Right cardiac atrium (tissue), 5 donors: ENCODE measurements at regions of chr3 and their contacts with region 1.

Region 1: DNA sequence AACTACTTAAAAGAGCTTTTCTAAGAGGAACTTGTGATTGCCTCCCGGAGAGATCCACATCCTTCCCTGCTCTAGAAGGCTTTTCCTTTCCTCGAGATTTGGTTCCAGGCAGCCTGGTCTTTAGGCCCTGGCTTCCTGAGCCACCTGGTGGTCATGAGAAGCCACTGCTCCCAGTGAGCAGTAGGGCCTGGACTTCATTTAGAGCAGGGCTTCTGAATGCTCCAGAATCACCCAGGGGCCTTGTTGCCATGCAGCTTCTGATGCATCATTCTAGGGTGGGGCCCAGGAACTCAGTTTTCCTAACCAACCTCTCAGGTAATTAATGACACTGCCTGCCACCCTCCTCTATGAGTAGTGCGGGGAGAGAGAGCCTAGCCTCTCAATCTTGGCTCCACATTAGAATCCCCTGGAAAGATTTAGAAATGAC is 29.6 kb downstream of the PSMD6 start:
- DNase-seq: peak; percentile 55 to 85 (median 76)
- ATAC-seq: peak; percentile 87 to 92
- H3K4me3 ChIP-seq: no peak overlapping the region
- H3K27ac ChIP-seq: no peak overlapping the region
- H3K4me1 ChIP-seq: no peaks in the 10 kb centered on the region
- H3K27me3 ChIP-seq: no peaks in the 10 kb centered on the region

Region 2: DNA sequence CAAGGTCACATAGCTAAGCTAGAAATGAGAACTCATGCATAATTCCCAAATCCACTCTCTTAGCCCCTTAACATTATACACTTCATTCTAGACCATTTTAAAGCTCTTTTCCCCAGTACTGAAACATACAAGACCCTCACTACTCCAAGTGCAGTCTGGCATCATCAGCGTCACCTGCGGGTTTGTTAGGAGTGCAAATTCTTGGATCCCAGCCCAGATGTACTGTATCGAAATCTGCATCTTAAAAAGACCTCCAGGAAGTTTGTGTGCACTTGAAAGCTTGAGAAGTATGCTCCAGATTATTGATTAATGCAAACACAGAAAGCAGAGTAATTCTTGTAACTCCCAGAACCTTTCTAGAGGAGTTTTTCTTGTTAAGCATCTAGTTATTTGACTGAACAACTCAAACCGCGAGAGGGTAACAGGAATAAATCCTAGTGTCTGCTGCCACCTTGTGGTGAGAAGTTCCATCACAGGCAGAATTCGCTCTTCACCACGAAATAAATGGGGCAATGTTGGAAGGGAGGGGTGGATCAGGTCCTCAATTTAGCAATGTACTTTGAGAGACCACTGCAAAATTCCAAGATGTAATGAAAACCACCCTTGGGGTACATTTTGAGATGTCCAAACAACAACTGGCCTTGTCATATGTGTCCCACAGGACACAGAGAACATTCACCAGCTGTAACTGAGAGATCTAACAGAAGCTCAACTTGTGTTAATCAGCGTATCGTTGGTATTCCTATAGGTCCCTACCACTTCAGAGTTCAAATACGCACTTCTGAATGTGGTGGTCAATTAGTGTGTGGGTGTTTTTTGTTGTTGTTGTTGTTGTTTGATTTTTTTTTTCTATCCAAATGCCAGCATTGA is 175.2 kb before region 1 on chr3:
- intact Hi-C with region 1: no loop called
- DNase-seq: peak; percentile 19 to 61 (median 50)
- ATAC-seq: peak in 1 of 2 donors; percentile 64
- H3K4me3 ChIP-seq: no peak overlapping the region
- H3K27ac ChIP-seq: no peak overlapping the region
- H3K4me1 ChIP-seq: no peaks in the 10 kb centered on the region
- H3K27me3 ChIP-seq: no peaks in the 10 kb centered on the region

Region 3: DNA sequence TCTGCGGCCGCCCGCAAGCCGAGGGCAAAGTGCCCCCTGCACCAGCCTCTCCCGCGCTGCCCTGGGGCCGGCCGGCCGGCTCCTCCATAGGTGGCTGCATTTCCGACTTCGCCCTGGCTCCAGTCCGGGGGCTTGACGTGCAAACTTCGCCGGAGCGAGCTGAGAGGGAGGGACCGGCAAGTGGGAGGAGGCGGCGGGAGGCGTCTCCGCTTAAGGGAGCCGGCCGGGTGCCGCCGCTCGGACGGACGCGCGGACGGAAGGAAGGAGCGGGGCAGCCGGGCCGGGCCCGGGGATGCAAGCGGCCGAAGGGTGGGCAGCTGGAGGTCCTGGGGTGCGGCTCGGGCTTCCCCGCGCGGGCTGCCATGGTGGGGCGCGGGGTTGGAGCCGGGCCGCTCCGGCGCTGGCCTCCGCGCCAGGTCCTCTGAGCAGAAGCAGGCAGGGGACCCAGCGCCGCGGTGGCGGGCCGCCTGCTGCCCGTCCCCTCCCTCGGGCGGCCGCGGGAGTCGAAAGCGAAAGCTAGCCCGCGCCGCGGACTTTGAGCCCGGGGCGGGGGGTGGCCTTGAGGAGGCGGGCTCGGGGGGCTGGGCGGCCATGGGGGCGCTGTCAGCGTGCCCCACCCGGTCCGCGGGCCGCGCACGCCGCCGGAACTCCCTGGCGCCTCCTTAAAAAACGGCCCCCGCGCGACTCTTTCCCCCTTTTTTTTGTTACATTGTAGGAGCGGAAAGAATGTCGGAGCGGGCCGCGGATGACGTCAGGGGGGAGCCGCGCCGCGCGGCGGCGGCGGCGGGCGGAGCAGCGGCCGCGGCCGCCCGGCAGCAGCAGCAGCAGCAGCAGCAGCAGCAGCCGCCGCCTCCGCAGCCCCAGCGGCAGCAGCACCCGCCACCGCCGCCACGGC is 81.5 kb before region 1 on chr3 and contains the start of gene SCAANT1:
- intact Hi-C with region 1: loop called in 1 of 4 experiments (anchors 10 kb)
- DNase-seq: peak; percentile 94 to 96 (median 96)
- ATAC-seq: peak; percentile 92 to 95
- H3K4me3 ChIP-seq: peak within 1 kb of the TSS; percentile 84
- H3K27ac ChIP-seq: peak within 1 kb of the TSS; percentile 92
- H3K4me1 ChIP-seq: no peaks in the 10 kb centered on the region
- H3K27me3 ChIP-seq: no peaks in the 10 kb centered on the region
- total RNA-seq, gene SCAANT1: not detected